ENCODE measurements at regions of chr17 and their contacts with region 1.

Region 1: DNA sequence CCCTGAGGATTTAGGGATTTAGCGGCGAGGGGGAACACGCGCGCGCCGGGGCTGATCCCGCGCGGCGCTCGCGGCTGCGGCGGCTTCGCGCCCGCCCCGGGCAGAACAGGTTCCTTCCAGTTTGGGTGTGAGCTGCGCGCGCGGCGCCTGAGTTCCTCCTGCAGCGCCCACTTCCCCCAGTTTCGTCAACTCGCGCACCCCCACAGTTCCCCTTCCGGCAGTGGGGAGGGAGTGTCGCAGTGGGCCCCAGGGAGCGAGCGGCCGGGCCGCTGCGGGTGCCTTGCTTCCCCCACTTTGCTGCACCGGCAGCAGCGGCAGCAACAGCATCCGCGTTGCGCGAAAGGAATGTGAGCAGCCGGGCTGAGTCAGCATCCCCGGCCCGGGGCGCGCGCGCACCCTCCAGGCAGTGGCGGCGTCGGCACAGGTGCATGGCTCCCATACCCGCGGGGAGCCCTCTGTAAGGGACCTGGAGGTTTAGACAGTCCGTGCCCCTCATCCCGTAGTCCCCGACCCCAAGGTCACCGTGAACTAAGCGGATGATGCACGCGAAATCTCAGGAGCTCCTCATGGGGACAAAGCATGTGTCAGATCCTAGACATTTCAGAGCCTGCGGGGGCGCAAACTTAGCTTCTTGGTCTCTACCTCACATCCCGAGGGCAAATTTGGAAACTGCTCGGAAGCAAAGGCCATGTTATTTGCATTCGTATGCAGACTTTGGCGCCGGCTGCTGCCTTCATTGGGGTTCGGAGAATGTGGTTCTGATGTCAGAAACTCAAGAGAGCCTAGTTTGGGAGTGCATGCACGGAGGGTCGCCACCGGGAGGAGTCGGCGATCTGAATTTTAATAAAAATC is 775 bp downstream of the ARSG start:
- DNase-seq: peak; percentile 81 to 89
- ATAC-seq: peak; percentile 75 to 82 (median 80)
- H3K4me3 ChIP-seq: peak overlapping the region; percentile 92
- H3K27ac ChIP-seq: peak overlapping the region; percentile 90
- H3K4me1 ChIP-seq: peaks cover 23% of the 10 kb centered on the region
- H3K27me3 ChIP-seq: no peaks in the 10 kb centered on the region
- CTCF ChIP-seq: no peak

Region 2: GRCh38 chr17:68205251-68205807 is 86.7 kb before region 1 on chr17:
- intact Hi-C with region 1: no loop called
- DNase-seq: peak; percentile 94 to 96
- ATAC-seq: peak; percentile 91 to 94 (median 92)
- H3K4me3 ChIP-seq: peak overlapping the region; percentile 85
- H3K27ac ChIP-seq: peak overlapping the region; percentile 71
- H3K4me1 ChIP-seq: peaks cover 12% of the 10 kb centered on the region
- H3K27me3 ChIP-seq: no peaks in the 10 kb centered on the region
- CTCF ChIP-seq: peak; percentile 92

Region 3: DNA sequence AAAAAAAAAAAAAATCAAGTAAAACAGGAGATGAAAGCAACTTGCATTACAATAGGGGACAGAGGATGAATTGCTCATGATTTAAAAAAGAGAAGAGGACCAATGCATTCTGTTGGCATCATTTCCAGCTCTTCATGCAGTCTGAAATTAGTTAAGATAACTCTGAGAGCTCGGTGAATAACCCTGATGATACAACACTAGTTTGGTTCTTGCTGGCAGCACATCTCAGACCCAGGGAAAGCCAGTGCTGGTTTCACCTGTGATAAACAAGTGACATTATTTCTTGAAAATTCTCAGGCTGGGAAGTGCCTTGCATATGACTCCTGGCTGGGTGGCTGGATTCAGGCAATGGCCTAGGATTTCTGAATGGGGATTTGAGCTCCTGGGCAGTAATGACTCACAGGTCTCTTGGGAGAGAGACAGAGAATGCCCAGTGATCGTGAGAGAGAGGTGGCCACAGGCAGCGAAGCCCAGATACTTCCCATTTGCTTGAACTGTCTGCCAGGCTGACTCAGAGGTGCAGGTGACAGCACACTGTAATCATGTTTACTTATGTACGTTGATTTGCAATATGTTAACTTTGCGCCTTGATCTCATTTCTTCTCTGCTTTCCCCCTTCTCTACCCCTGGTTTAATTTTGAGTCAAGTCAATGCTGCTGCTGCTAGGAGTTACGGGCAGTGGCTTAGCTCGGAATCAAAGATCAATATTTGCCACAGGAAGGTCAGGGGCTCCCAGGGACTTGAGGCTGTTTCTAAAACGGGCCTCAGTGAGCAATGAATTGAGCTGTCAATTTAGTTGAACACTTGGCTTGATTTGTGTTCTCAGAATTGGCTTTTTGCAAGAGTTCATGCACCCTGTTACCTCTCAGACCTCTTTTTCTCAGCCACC is 26.3 kb after region 1 on chr17:
- intact Hi-C with region 1: loop called in 1 of 2 experiments (anchors 2 kb)
- DNase-seq: peak; percentile 55 to 84
- ATAC-seq: peak; percentile 88 to 91 (median 90)
- H3K4me3 ChIP-seq: peak overlapping the region; percentile 10
- H3K27ac ChIP-seq: peak overlapping the region; percentile 99
- H3K4me1 ChIP-seq: peaks cover 37% of the 10 kb centered on the region
- H3K27me3 ChIP-seq: no peaks in the 10 kb centered on the region
- CTCF ChIP-seq: no peak

Region 4: DNA sequence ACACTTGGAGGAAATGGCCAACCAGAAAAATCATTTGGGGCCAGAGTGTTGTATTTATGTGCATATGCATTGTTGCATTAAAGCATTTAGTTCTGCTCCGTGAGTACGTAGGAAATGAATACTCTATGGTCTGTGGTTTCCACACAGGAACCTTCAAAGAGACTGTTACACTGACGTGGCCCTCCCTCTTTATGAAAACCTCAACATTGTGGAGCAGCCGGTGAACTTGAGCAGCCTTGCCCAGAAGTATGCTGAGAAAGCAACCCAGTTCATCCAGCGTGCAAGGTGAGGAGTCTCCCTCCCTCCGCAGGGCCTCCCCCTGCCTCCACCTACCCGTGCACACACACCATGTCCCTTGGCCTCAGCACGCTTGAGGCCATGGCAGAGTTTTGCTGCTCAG is 64.5 kb after region 1 on chr17:
- intact Hi-C with region 1: no loop called
- DNase-seq: no peak
- ATAC-seq: peak in 1 of 4 donors; percentile 25
- H3K4me3 ChIP-seq: no peak overlapping the region
- H3K27ac ChIP-seq: no peak overlapping the region
- H3K4me1 ChIP-seq: peaks cover 7% of the 10 kb centered on the region
- H3K27me3 ChIP-seq: no peaks in the 10 kb centered on the region
- CTCF ChIP-seq: no peak

Region 5: GRCh38 chr17:68377862-68378770 is 86.0 kb after region 1 on chr17:
- intact Hi-C with region 1: loop called in 1 of 2 experiments (anchors 2 kb)
- DNase-seq: peak; percentile 99
- ATAC-seq: peak; percentile 90 to 94 (median 91)
- H3K4me3 ChIP-seq: peak overlapping the region; percentile 41
- H3K27ac ChIP-seq: peak overlapping the region; percentile 89
- H3K4me1 ChIP-seq: peaks cover 41% of the 10 kb centered on the region
- H3K27me3 ChIP-seq: no peaks in the 10 kb centered on the region
- CTCF ChIP-seq: no peak